Keratinocyte (primary cell): ENCODE measurements at regions of chr2 and their contacts with region 1.

Region 1: GRCh38 chr2:234550511-234551107 is 53.7 kb upstream of the ARL4C start:
- DNase-seq: peak; percentile 46
- H3K4me3 ChIP-seq: no peak overlapping the region
- H3K27ac ChIP-seq: no peak overlapping the region
- H3K4me1 ChIP-seq: no peaks in the 10 kb centered on the region
- H3K27me3 ChIP-seq: no peaks in the 10 kb centered on the region
- CTCF ChIP-seq: peak; percentile 93 to 98 (median 94)

Region 2: GRCh38 chr2:235106874-235107639 is 556.4 kb after region 1 on chr2:
- dilution Hi-C with region 1: loop called (anchors 25 kb)
- DNase-seq: no peak
- H3K4me3 ChIP-seq: no peak overlapping the region
- H3K27ac ChIP-seq: no peak overlapping the region
- H3K4me1 ChIP-seq: no peaks in the 10 kb centered on the region
- H3K27me3 ChIP-seq: no peaks in the 10 kb centered on the region
- CTCF ChIP-seq: peak; percentile 69 to 84 (median 70)